Calu3 (cell line): ENCODE measurements at regions of chr20 and their contacts with region 1.

Region 1: GRCh38 chr20:38337561-38338140 is 8.6 kb upstream of the LBP start:
- DNase-seq: peak; percentile 64
- H3K4me3 Mint-ChIP-seq: no peak overlapping the region
- H3K27ac Mint-ChIP-seq: no peak overlapping the region
- H3K4me1 Mint-ChIP-seq: peaks cover under 1% of the 10 kb centered on the region
- H3K27me3 Mint-ChIP-seq: peaks cover 60% of the 10 kb centered on the region
- CTCF ChIP-seq: peak; percentile 84

Region 2: DNA sequence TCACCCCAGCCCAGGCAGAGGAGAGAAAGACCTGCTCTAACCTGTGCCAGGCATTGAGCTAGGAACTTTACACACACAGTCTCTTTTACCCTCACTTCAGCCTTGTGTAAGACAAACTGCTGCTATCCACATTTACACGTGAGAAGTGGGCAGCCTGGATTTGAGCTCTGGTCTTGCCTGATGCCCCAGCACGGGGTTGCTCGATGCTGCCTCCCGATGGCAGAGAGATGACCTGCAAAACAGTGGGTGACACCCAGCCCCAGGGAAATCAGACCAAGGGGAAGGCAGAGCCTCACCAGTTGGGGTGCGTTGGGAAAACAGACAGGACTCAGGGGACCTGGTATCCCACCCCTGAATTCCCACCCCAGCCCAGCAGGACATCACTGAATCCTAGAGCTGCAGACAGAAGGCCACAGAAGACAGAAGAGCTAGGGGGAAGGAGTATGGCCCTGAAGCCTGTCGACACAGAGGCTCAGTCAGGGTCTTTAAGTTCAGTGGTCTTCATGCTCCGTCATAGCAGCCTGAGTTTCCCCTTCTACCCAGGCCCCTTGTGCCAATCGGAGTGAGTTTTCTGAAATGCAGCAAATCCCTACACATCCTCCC is 32.7 kb before region 1 on chr20:
- CTCF ChIA-PET with region 1: no interaction called
- intact Hi-C with region 1: no loop called
- DNase-seq: peak; percentile 84
- H3K4me3 Mint-ChIP-seq: no peak overlapping the region
- H3K27ac Mint-ChIP-seq: no peak overlapping the region
- H3K4me1 Mint-ChIP-seq: peaks cover 8% of the 10 kb centered on the region
- H3K27me3 Mint-ChIP-seq: peaks cover 52% of the 10 kb centered on the region
- CTCF ChIP-seq: peak; percentile 78

Region 3: GRCh38 chr20:38392356-38392755 is 54.7 kb after region 1 on chr20:
- CTCF ChIA-PET with region 1: no interaction called
- intact Hi-C with region 1: loop called (anchors 5 kb)
- DNase-seq: peak; percentile 24
- H3K4me3 Mint-ChIP-seq: no peak overlapping the region
- H3K27ac Mint-ChIP-seq: no peak overlapping the region
- H3K4me1 Mint-ChIP-seq: no peaks in the 10 kb centered on the region
- H3K27me3 Mint-ChIP-seq: peaks cover 26% of the 10 kb centered on the region
- CTCF ChIP-seq: no peak

Region 4: GRCh38 chr20:38412877-38413577 is 75.4 kb after region 1 on chr20:
- CTCF ChIA-PET with region 1: interaction called, 48 read pairs
- intact Hi-C with region 1: loop called (anchors 1 kb)
- DNase-seq: no peak
- H3K4me3 Mint-ChIP-seq: no peak overlapping the region
- H3K27ac Mint-ChIP-seq: no peak overlapping the region
- H3K4me1 Mint-ChIP-seq: peaks cover 5% of the 10 kb centered on the region
- H3K27me3 Mint-ChIP-seq: no peaks in the 10 kb centered on the region
- CTCF ChIP-seq: no peak